ENCODE measurements at regions of chr3 and their contacts with region 1.

Region 1: GRCh38 chr3:9302425-9303181 is 53.2 kb upstream of the SRGAP3 start:
- DNase-seq: peak; percentile 84

Region 2: GRCh38 chr3:8970971-8971589 is 331.5 kb before region 1 on chr3:
- in situ Hi-C with region 1: loop called (anchors 10 kb)
- DNase-seq: peak; percentile 73

Region 3: GRCh38 chr3:9769426-9770275 is 467.0 kb after region 1 on chr3 and contains the start of gene CAMK1:
- in situ Hi-C with region 1: no loop called
- DNase-seq: no peak

Region 4: DNA sequence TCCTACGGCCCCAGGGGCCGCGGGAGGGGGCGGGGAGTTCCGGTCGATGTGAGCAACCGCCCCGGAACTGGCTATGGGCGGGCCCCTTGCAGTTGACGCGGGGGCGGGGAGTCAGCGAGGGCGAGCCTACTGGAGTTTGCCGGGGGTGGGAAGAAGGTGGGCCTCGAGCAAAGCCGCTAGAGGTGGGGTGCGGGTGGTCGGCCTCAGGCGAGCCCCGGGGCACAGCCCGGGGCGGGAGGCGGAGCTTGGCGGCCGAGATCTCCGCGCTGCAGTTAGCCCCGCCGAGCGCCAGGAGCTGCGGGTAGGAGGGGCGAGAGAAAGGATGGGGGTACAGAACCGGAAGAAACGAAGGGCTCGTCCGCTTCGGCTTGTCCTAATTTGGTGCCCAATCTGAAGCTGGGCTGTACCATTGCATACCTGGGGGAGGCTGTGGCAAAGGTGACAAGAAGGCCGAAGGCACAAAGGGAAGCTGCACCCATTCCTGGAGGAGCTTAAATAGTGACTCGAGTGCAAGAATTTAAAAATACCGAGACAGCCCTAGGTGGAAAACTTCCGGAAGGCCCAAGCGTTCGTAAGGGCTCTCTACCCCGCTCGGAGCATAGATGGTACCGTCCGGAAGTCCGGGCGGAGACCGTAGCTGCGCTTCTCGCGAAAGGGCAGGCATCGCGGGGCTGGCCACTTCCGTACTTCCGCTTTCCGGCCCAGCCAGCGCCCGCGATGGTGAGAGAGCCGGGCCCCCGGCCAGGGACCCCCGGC is 490.0 kb after region 1 on chr3 and contains the starts of genes ARPC4 and TADA3:
- in situ Hi-C with region 1: no loop called
- DNase-seq: peak; percentile 97

Region 5: GRCh38 chr3:9826815-9827567 is 524.4 kb after region 1 on chr3:
- in situ Hi-C with region 1: no loop called
- DNase-seq: peak; percentile 79